ENCODE measurements at regions of chr14 and their contacts with region 1.

Region 1: GRCh38 chr14:93115069-93115820 is 480 bp downstream of the ITPK1 start:
- DNase-seq: peak; percentile 27 to 92
- H3K4me3 ChIP-seq: peak overlapping the region; percentile 97 to 99
- H3K27ac ChIP-seq: peak overlapping the region; percentile 98 to 100
- H3K4me1 ChIP-seq: peaks cover 9 to 28% of the 10 kb centered on the region in 2 donors
- H3K27me3 ChIP-seq: no peaks in the 10 kb centered on the region
- CTCF ChIP-seq: peak in 1 of 3 experiments; percentile 16

Region 2: GRCh38 chr14:92973261-92973797 is 141.9 kb before region 1 on chr14:
- intact Hi-C with region 1: loop called (anchors 5 kb)
- DNase-seq: peak in 1 of 2 donors; percentile 87
- H3K4me3 ChIP-seq: no peak overlapping the region
- H3K27ac ChIP-seq: no peak overlapping the region
- H3K4me1 ChIP-seq: peaks cover 0 to 8% of the 10 kb centered on the region in 2 donors
- H3K27me3 ChIP-seq: no peaks in the 10 kb centered on the region
- CTCF ChIP-seq: peak; percentile 66 to 69 (median 68)

Region 3: DNA sequence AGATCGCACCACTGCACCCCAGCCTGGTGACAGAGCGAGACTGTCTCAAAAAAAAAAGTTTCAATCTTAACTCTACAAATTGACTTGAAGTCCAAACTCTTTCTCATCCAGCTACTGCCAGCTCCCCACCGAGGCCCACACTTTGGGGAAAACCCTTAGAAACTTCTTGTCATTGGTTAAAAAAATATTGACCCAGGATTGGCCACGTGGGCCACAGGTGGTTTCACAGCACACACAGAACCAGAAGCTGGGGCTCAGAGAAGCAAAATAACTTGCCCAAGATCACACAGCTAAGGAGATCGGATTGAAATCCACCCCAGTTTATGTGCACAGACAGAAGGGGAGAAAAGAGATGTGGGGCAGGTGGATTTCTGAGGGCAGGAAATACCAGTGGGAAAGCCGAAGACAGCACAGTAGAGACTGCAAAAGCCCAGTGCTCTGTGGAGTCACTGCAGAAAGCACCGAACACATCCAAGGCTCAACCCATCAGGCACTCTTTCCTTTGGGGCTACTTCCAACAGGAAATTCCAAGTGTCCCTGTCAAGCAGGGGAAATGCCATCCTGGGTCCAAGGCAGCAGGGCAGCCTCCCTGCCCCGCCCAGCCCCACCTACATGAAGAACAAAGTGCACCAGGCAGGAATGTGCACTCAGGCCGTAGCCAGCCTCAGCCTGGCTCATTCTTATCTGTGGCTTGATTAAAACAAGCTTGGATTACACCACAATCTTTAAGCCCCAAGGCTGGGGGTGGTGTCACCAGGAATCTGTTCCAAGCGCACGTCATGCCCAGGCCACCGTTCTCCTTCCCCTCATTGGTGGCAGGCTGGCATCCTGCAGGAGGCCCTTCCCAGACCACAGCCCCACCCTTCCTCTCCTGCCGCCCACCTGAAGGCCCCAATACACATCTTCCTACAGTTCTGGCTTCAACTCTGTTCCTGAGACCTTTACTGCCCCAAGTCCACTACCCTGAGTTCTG is 72.0 kb before region 1 on chr14:
- intact Hi-C with region 1: loop called (anchors 5 kb)
- DNase-seq: peak in 1 of 2 donors; percentile 91
- H3K4me3 ChIP-seq: no peak overlapping the region
- H3K27ac ChIP-seq: peak overlapping the region; percentile 71 to 85
- H3K4me1 ChIP-seq: peaks cover 18 to 55% of the 10 kb centered on the region in 2 donors
- H3K27me3 ChIP-seq: no peaks in the 10 kb centered on the region
- CTCF ChIP-seq: no peak

Region 4: DNA sequence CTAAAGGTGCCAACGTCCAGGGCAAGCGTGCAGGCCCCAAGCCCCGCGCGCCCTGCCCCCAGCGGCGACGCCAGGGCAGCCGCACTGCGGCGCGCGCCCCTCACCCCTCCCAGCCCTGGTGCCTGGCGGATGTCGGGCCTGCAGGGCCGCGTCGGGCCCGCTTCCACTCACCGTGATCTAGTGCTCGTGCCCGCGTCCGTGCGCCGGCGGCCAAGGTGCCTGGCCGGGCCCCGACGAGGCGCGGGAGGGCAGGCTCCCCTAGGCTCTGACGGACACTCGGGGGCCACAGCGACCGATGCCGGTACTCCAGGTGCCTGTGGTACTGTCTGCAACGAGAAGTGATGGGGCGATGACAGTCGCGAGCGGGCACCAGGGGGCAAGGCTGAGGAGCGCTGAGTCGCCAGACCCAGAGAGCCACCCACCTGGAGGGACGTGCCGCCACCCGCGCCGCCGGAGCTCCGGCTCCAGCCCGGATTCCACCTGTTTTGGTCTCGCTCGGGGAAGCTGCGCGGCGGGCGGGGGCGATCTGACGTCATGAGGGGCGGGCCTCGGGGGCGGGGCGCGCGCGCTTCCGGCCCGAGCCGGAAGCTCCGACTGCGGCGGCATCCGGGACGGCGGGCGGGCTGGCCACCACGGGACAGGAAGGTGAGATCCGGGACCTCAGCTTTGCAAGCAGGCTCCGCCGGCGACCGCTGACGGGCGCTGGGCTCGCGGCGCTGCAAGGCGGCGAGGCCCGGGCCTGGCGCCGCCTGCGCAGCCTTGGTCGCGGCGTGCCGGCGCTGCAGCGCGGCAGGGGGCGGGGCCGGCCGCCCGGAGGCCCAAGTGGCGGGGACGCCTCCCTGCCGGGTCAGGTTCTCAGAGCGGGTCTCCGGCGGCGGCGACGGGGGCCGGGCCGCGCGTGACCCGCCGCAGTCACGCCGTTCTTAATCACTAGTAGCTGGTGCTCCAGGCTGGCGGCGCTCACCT is 69.4 kb after region 1 on chr14 and contains the starts of genes LYSET and MOAP1:
- intact Hi-C with region 1: loop called (anchors 1 kb)
- DNase-seq: peak; percentile 63 to 92
- H3K4me3 ChIP-seq: peak within 1 kb of the TSS; percentile 94 to 99
- H3K27ac ChIP-seq: peak within 1 kb of the TSS; percentile 94 to 97
- H3K4me1 ChIP-seq: peaks cover 10 to 13% of the 10 kb centered on the region in 2 donors
- H3K27me3 ChIP-seq: no peaks in the 10 kb centered on the region
- CTCF ChIP-seq: peak in 2 of 3 experiments; percentile 28 to 41
- total RNA-seq, gene LYSET: 2.3 TPM
- total RNA-seq, gene MOAP1: 4.3 TPM

Region 5: GRCh38 chr14:93195316-93195999 is 80.2 kb after region 1 on chr14:
- intact Hi-C with region 1: no loop called
- DNase-seq: no peak
- H3K4me3 ChIP-seq: no peak overlapping the region
- H3K27ac ChIP-seq: no peak overlapping the region
- H3K4me1 ChIP-seq: no peaks in the 10 kb centered on the region
- H3K27me3 ChIP-seq: no peaks in the 10 kb centered on the region
- CTCF ChIP-seq: no peak

Region 6: DNA sequence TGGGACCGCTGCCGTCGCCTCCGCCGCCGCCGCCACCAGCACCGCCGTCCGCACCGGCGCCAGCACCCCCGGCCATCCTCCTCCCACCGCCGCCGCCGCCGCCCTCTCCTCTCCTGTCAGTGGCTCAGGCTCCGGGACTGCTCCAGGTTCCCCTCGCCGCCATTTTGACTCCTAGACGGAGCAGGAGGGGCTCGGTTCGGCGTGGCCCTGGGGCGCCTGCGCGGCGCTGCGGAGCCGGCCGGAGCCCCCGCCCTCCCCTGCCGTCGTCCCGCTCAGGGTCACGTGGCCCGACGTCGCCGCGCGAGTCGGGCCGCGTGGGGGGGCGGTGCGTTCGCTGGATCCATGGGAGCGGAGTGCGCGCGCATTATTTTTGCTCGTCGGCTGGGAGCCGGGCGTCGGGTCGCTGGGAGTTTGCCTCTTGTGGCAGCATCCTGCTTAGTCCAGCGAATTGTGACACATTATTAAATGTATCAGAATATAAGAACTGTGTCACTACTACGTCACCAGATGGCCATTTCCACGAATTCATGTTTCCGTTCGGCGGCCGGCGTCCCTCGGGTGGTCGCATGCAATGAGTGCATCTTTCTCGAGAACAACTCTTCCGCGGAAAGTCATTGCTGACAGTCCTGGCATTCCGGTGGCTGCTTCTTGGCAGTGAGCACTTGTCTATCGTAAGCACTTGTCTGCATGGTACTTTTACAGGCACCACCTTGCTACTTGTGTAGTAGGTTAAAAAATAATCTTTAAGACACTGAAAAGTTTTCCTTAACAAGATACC is 217.8 kb after region 1 on chr14 and contains the start of gene BTBD7:
- intact Hi-C with region 1: loop called (anchors 2 kb)
- DNase-seq: peak; percentile 73 to 97
- H3K4me3 ChIP-seq: peak within 1 kb of the TSS; percentile 85 to 91
- H3K27ac ChIP-seq: peak within 1 kb of the TSS; percentile 86 to 97
- H3K4me1 ChIP-seq: peaks cover 0 to 25% of the 10 kb centered on the region in 2 donors
- H3K27me3 ChIP-seq: no peaks in the 10 kb centered on the region
- CTCF ChIP-seq: peak in 1 of 3 experiments; percentile 9
- total RNA-seq, gene BTBD7: 17.2 TPM

Measured in ascending aorta (tissue), 2 donors.